PC-3 (cell line): ENCODE measurements at regions of chr10 and their contacts with region 1.

Region 1: GRCh38 chr10:53601260-53601875 is 828.8 kb upstream of the MBL2 start:
- DNase-seq: peak; percentile 92
- ATAC-seq: peak; percentile 55
- H3K4me3 ChIP-seq: no peak overlapping the region
- H3K27ac ChIP-seq: no peak overlapping the region
- H3K4me1 ChIP-seq: peaks cover 20% of the 10 kb centered on the region
- H3K27me3 ChIP-seq: no peaks in the 10 kb centered on the region
- CTCF ChIP-seq: peak; percentile 100; the same call in 1 of the 2 replicates

Region 2: GRCh38 chr10:52933748-52934147 is 667.6 kb before region 1 on chr10:
- CTCF ChIA-PET with region 1: interaction called, 9 read pairs
- POLR2A ChIA-PET with region 1: interaction called, 15 read pairs
- intact Hi-C with region 1: no loop called
- DNase-seq: no peak
- ATAC-seq: no peak
- H3K4me3 ChIP-seq: no peak overlapping the region
- H3K27ac ChIP-seq: no peak overlapping the region
- H3K4me1 ChIP-seq: no peaks in the 10 kb centered on the region
- H3K27me3 ChIP-seq: 0 out of 2 replicates have a peak, but pooled peaks cover 3% of the 10 kb centered on the region
- CTCF ChIP-seq: no peak

Region 3: DNA sequence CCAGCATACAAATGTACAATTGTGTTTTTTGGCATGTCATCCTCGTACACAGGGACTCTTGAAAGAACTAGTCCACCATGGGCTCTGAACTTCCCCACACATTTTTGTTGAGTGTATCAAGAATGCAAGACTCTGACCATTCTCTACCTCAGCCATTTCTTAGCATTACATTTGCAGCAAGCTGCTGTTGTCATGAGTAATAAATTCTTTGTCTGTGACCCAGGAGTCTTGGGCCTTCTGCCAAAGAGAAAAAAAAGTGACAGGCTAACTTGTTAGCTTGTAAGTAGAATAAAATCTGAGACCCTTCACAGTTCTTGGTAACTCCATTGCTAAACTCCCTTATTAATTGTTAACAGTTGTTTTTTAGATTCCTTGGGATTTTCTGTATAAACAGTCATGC is 286.5 kb before region 1 on chr10:
- CTCF ChIA-PET with region 1: interaction called, 13 read pairs
- POLR2A ChIA-PET with region 1: no interaction called
- intact Hi-C with region 1: loop called (anchors 1 kb)
- DNase-seq: peak; percentile 100
- ATAC-seq: peak; percentile 97
- H3K4me3 ChIP-seq: no peak overlapping the region
- H3K27ac ChIP-seq: no peak overlapping the region
- H3K4me1 ChIP-seq: peaks cover 14% of the 10 kb centered on the region
- H3K27me3 ChIP-seq: no peaks in the 10 kb centered on the region
- CTCF ChIP-seq: no peak

Region 4: DNA sequence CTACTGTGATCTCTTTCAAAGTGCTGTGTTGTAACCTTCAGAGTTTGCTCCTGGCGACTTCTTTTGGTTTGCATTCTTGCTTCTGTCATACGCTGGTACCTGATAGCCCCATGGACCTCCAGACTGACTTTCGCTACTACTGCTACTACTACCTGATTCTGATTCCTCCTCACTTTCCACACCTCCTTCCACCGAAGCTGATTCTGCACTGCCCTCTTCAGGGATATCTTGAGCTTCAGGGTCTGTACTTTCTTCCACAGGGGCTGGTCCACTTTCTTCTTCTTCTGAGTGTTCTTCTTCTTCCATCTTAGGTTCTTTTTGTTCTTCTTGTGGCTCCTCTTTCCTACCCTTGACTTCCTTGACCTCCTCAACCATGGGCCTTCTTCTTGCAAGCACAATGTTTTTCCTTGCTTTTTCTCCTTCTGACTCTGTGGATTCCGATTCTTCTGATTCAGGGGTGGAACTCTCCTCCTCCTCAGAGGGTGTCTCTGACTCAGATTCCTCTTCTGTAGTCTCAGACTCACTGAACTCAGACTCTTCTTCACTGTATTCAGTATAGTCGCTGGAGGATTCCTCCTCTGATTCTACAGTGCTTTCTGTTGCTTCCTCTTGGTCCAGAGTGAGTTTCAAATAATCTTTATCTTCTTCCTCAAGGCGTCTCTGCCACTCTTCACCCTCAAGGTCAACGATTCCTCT is 207.5 kb after region 1 on chr10:
- CTCF ChIA-PET with region 1: no interaction called
- POLR2A ChIA-PET with region 1: no interaction called
- intact Hi-C with region 1: loop called (anchors 1 kb)
- DNase-seq: peak; percentile 31
- ATAC-seq: peak; percentile 83
- H3K4me3 ChIP-seq: no peak overlapping the region
- H3K27ac ChIP-seq: no peak overlapping the region
- H3K4me1 ChIP-seq: no peaks in the 10 kb centered on the region
- H3K27me3 ChIP-seq: no peaks in the 10 kb centered on the region
- CTCF ChIP-seq: peak; percentile 46

Region 5: DNA sequence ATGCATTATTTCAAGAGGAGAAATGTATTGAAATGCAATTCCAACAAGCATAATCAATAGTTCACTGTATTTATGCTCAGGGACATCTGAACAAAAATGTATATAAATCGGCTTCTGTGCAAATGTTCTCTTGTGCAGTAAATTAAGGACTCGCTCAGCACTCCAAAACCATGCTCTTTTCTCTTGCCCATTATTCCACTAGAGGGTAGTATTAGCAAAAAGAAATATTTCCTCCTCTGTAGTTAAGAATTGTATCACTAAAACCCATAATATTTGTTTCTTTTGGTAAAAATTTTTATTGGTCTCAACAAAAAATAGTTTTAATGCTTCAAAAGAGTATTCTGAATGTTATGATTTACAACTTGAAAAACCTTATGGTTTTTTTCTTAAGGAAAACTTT is 396.6 kb after region 1 on chr10:
- CTCF ChIA-PET with region 1: no interaction called
- POLR2A ChIA-PET with region 1: no interaction called
- intact Hi-C with region 1: loop called (anchors 1 kb)
- DNase-seq: peak; percentile 60
- ATAC-seq: peak; percentile 93
- H3K4me3 ChIP-seq: no peak overlapping the region
- H3K27ac ChIP-seq: no peak overlapping the region
- H3K4me1 ChIP-seq: no peaks in the 10 kb centered on the region
- H3K27me3 ChIP-seq: no peaks in the 10 kb centered on the region
- CTCF ChIP-seq: peak; percentile 87

Region 6: GRCh38 chr10:55263327-55263726 is 1662.0 kb after region 1 on chr10:
- CTCF ChIA-PET with region 1: no interaction called
- POLR2A ChIA-PET with region 1: no interaction called
- intact Hi-C with region 1: loop called (anchors 10 kb)
- DNase-seq: no peak
- ATAC-seq: peak; percentile 20
- H3K4me3 ChIP-seq: no peak overlapping the region
- H3K27ac ChIP-seq: no peak overlapping the region
- H3K4me1 ChIP-seq: no peaks in the 10 kb centered on the region
- H3K27me3 ChIP-seq: no peaks in the 10 kb centered on the region
- CTCF ChIP-seq: no peak